Activated CD8-positive, alpha-beta T cell treated with anti-CD3 and anti-CD28 coated beads for 36 hours (primary cell): ENCODE measurements at regions of chr14 and their contacts with region 1.

Region 1: DNA sequence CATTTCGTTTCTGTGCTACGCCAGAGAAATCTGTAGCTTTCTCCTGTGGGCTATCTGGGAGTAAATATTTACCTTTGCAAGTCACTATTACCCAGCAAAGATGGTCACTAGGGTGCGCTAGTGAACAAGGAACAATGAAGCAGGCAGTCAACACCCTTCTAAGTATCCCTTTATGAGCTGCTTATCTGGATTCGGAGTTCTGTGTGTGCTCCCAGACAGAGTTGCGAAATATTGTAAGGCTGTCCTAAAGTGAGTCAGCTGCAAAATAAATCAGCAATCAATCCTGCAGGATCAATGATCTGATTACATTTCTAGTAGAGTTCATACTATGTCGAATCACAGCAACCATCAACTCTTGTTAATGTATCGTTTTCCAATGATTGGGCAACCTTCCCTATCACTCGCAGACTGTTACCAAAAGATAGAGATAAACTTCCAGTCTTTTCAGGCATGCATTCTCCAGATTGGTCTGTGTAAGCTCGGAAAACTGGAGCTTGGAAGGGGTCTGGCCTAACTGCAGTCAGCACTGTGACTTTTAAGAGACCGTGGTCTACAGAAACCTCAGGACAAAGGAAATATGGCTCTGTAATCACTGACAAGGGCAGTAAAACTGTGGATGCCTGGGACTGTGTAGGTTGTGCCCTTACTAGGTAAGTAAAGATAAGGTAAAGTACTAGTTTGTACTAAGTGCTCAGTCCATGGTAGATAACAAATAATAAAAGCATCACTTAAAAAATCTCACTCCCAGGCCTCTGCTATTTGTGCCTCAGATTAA is 133.5 kb downstream of the KCNK10 start:
- DNase-seq: peak; percentile 82
- ATAC-seq: peak; percentile 74
- H3K4me3 Mint-ChIP-seq: no peak overlapping the region
- H3K27ac Mint-ChIP-seq: no peak overlapping the region
- H3K4me1 Mint-ChIP-seq: peaks cover 5% of the 10 kb centered on the region
- H3K27me3 Mint-ChIP-seq: peaks cover 7% of the 10 kb centered on the region
- CTCF ChIP-seq: peak; percentile 72

Region 2: GRCh38 chr14:87944987-87945604 is 244.5 kb before region 1 on chr14:
- CTCF ChIA-PET with region 1: interaction called, 66 read pairs
- POLR2A ChIA-PET with region 1: no interaction called
- intact Hi-C with region 1: no loop called
- DNase-seq: no peak
- ATAC-seq: peak; percentile 62
- H3K4me3 Mint-ChIP-seq: no peak overlapping the region
- H3K27ac Mint-ChIP-seq: no peak overlapping the region
- H3K4me1 Mint-ChIP-seq: peaks cover 2% of the 10 kb centered on the region
- H3K27me3 Mint-ChIP-seq: no peaks in the 10 kb centered on the region
- CTCF ChIP-seq: peak; percentile 83

Region 3: DNA sequence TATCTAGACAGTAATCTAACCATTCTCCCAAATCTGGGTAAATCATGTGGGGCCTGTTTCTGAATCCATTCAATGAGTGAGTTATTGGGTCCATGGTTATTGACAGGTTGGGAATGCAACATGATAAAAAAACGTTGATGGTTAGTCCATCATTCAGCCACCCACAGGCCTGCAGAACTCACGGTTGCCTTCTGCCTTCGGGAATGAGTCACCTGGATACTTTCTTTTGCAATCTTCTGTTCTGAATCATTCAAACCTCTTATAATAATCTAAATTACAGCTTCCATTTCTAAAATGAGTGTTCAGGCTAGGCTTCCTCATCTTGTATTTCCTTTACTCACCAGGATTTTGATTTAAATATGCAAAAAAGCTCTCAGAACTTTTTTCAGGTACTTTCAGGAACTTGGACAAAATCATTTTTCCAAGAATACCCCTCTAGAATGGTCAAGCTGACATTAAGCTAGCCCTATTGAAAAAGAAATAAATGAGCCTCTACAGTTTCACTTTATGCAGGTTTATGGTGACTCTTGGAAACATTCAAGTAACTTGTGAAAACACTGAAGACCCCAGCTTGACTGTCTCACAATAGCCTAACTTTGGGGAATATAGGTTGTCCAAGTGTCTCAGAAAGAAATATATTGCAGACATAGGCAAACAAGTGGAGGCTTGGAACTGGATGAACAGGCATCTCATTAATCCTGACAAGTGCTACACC is 39.1 kb after region 1 on chr14:
- CTCF ChIA-PET with region 1: interaction called, 31 read pairs
- POLR2A ChIA-PET with region 1: no interaction called
- intact Hi-C with region 1: loop called (anchors 5 kb)
- DNase-seq: peak; percentile 21
- ATAC-seq: peak; percentile 59
- H3K4me3 Mint-ChIP-seq: no peak overlapping the region
- H3K27ac Mint-ChIP-seq: no peak overlapping the region
- H3K4me1 Mint-ChIP-seq: peaks cover 10% of the 10 kb centered on the region
- H3K27me3 Mint-ChIP-seq: peaks cover 10% of the 10 kb centered on the region
- CTCF ChIP-seq: no peak

Region 4: GRCh38 chr14:88233915-88234314 is 44.3 kb after region 1 on chr14:
- CTCF ChIA-PET with region 1: interaction called, 31 read pairs
- POLR2A ChIA-PET with region 1: no interaction called
- intact Hi-C with region 1: loop called (anchors 5 kb)
- DNase-seq: peak; percentile 32
- ATAC-seq: no peak
- H3K4me3 Mint-ChIP-seq: no peak overlapping the region
- H3K27ac Mint-ChIP-seq: no peak overlapping the region
- H3K4me1 Mint-ChIP-seq: no peaks in the 10 kb centered on the region
- H3K27me3 Mint-ChIP-seq: peaks cover 6% of the 10 kb centered on the region
- CTCF ChIP-seq: no peak

Region 5: GRCh38 chr14:88380405-88380804 is 190.8 kb after region 1 on chr14:
- CTCF ChIA-PET with region 1: interaction called, 13 read pairs
- POLR2A ChIA-PET with region 1: no interaction called
- intact Hi-C with region 1: no loop called
- DNase-seq: no peak
- ATAC-seq: no peak
- H3K4me3 Mint-ChIP-seq: no peak overlapping the region
- H3K27ac Mint-ChIP-seq: no peak overlapping the region
- H3K4me1 Mint-ChIP-seq: peaks cover 8% of the 10 kb centered on the region
- H3K27me3 Mint-ChIP-seq: no peaks in the 10 kb centered on the region
- CTCF ChIP-seq: peak; percentile 17

Region 6: GRCh38 chr14:88551094-88551870 is 361.7 kb after region 1 on chr14:
- CTCF ChIA-PET with region 1: interaction called, 3 read pairs
- POLR2A ChIA-PET with region 1: no interaction called
- intact Hi-C with region 1: loop called (anchors 10 kb)
- DNase-seq: peak; percentile 54
- ATAC-seq: peak; percentile 54
- H3K4me3 Mint-ChIP-seq: peak overlapping the region; percentile 67
- H3K27ac Mint-ChIP-seq: no peak overlapping the region
- H3K4me1 Mint-ChIP-seq: peaks cover 14% of the 10 kb centered on the region
- H3K27me3 Mint-ChIP-seq: peaks cover 37% of the 10 kb centered on the region
- CTCF ChIP-seq: no peak

Region 7: DNA sequence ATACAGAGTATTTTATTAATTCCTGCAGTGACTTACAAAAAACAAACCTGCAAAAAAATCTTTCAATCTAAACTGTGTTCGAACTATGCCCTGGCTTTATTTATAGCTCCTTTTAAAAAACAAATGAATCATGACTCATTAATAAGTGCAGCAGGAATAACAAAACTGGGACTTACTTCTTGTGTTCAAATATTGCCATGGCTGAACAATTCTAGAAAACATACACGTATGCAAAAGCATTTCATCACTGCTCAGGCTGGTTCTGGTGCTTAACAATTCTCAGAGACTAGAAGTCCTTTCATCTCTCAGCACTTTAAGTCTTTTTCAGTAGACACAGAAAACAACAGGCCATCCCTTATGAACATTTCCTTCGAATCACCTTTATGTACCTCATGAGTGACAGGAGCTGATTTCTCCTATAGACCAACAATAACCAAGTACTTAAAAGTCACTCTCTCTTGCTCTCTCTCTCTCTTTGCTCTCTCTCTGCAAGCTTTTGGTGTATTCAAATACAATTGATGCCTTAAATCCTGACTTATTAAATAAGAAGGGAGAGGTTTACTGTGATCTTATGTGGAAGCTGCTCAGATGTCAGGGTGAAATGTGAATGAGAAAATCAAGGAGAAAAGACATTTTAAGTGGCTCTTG is 903.6 kb after region 1 on chr14:
- CTCF ChIA-PET with region 1: no interaction called
- POLR2A ChIA-PET with region 1: no interaction called
- intact Hi-C with region 1: no loop called
- DNase-seq: no peak
- ATAC-seq: no peak
- H3K4me3 Mint-ChIP-seq: no peak overlapping the region
- H3K27ac Mint-ChIP-seq: no peak overlapping the region
- H3K4me1 Mint-ChIP-seq: no peaks in the 10 kb centered on the region
- H3K27me3 Mint-ChIP-seq: no peaks in the 10 kb centered on the region
- CTCF ChIP-seq: no peak